Activated CD8-positive, alpha-beta T cell treated with anti-CD3 and anti-CD28 coated beads, Interleukin-2, amount 10 ng/mL, durations not matched to agents 7 days and 5 days (primary cell): ENCODE measurements at regions of chr5 and their contacts with region 1.

Region 1: GRCh38 chr5:10627160-10627701 is 63.4 kb downstream of the ANKRD33B start:
- DNase-seq: no peak
- ATAC-seq: peak; percentile 40
- H3K4me3 Mint-ChIP-seq: peak overlapping the region; percentile 69
- H3K27ac Mint-ChIP-seq: peak overlapping the region; percentile 81
- H3K4me1 Mint-ChIP-seq: peaks cover 42% of the 10 kb centered on the region
- H3K27me3 Mint-ChIP-seq: no peaks in the 10 kb centered on the region

Region 2: DNA sequence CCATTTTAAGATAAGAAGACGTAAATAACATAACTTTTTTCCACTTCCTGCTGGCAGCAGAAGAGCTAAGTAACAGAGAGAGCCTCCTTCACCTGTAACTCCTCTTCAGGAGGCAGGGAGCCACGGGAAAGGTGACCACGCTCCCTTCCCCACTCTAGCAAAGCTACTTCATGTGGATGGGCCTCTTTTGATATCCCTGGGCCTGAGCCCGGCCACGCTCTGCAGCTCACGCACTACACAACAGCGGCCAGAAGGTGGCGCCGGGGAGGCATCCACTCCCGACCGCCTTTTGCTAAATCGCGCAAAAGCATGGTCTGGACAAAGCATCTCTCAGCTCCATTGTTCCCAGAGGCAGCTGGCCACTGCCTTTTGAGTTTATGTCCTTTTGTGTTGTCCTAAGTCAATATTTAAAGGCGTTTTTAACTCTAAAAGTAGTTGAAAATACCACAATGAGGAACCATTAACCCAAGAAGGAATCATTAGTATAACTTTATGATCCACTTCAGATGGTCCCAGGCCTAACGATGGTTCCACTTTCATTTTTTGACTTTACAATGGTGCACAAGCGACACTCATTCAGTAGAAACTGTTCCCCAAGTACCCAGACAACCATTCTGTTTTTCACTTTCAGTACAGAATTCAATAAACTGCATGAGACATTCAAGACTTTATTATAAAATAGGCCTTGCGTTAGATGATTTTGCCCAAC is 343.1 kb before region 1 on chr5:
- CTCF ChIA-PET with region 1: interaction called, 25 read pairs
- POLR2A ChIA-PET with region 1: no interaction called
- DNase-seq: peak; percentile 82
- ATAC-seq: peak; percentile 98
- H3K4me3 Mint-ChIP-seq: no peak overlapping the region
- H3K27ac Mint-ChIP-seq: no peak overlapping the region
- H3K4me1 Mint-ChIP-seq: peaks cover 14% of the 10 kb centered on the region
- H3K27me3 Mint-ChIP-seq: peaks cover 4% of the 10 kb centered on the region

Region 3: GRCh38 chr5:10452768-10453331 is 174.4 kb before region 1 on chr5:
- CTCF ChIA-PET with region 1: interaction called, 125 read pairs
- POLR2A ChIA-PET with region 1: interaction called, 3 read pairs
- DNase-seq: peak; percentile 53
- ATAC-seq: peak; percentile 79
- H3K4me3 Mint-ChIP-seq: no peak overlapping the region
- H3K27ac Mint-ChIP-seq: no peak overlapping the region
- H3K4me1 Mint-ChIP-seq: peaks cover 16% of the 10 kb centered on the region
- H3K27me3 Mint-ChIP-seq: no peaks in the 10 kb centered on the region

Region 4: GRCh38 chr5:10513501-10514442 is 113.5 kb before region 1 on chr5:
- CTCF ChIA-PET with region 1: no interaction called
- POLR2A ChIA-PET with region 1: no interaction called
- DNase-seq: no peak
- ATAC-seq: no peak
- H3K4me3 Mint-ChIP-seq: no peak overlapping the region
- H3K27ac Mint-ChIP-seq: no peak overlapping the region
- H3K4me1 Mint-ChIP-seq: no peaks in the 10 kb centered on the region
- H3K27me3 Mint-ChIP-seq: no peaks in the 10 kb centered on the region

Region 5: GRCh38 chr5:10543585-10544040 is 83.6 kb before region 1 on chr5:
- CTCF ChIA-PET with region 1: interaction called, 10 read pairs
- POLR2A ChIA-PET with region 1: no interaction called
- DNase-seq: no peak
- ATAC-seq: no peak
- H3K4me3 Mint-ChIP-seq: no peak overlapping the region
- H3K27ac Mint-ChIP-seq: no peak overlapping the region
- H3K4me1 Mint-ChIP-seq: no peaks in the 10 kb centered on the region
- H3K27me3 Mint-ChIP-seq: peaks cover 31% of the 10 kb centered on the region

Region 6: GRCh38 chr5:10577371-10578292 is 49.6 kb before region 1 on chr5:
- CTCF ChIA-PET with region 1: interaction called, 20 read pairs
- POLR2A ChIA-PET with region 1: interaction called, 4 read pairs
- DNase-seq: no peak
- ATAC-seq: no peak
- H3K4me3 Mint-ChIP-seq: no peak overlapping the region
- H3K27ac Mint-ChIP-seq: no peak overlapping the region
- H3K4me1 Mint-ChIP-seq: peaks cover 33% of the 10 kb centered on the region
- H3K27me3 Mint-ChIP-seq: no peaks in the 10 kb centered on the region

Region 7: DNA sequence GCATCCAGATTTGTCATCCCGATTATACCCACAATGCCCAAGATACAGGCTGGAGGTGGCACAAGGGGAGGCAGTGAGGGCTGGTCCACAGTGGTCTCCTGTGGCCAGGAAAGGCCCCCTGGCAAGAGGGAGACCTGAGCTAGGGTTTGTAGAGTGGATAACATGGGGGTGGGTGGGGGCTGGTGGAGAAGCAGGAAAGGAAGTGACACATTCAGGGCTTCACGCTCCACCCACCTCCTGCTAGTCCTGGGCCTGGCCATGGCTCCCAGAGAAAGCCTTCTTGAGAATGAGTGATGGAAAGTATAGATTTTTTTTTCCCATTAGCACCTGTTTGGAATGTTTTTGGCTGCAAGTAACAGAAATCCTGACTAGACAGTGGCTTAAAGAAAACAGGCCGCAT is 17.9 kb after region 1 on chr5:
- CTCF ChIA-PET with region 1: interaction called, 15 read pairs
- POLR2A ChIA-PET with region 1: no interaction called
- DNase-seq: no peak
- ATAC-seq: no peak
- H3K4me3 Mint-ChIP-seq: no peak overlapping the region
- H3K27ac Mint-ChIP-seq: no peak overlapping the region
- H3K4me1 Mint-ChIP-seq: peaks cover 22% of the 10 kb centered on the region
- H3K27me3 Mint-ChIP-seq: no peaks in the 10 kb centered on the region